HepG2 (cell line): ENCODE measurements at regions of chr1 and their contacts with region 1.

Region 1: GRCh38 chr1:52141513-52142219 is at the start of gene ZFYVE9:
- DNase-seq: peak; percentile 56
- ATAC-seq: peak; percentile 93
- H3K4me3 ChIP-seq: peak within 1 kb of the TSS; percentile 91 to 93 (median 93)
- H3K27ac ChIP-seq: peak within 1 kb of the TSS; percentile 83
- H3K4me1 ChIP-seq: peaks cover 57% of the 10 kb centered on the region
- H3K27me3 ChIP-seq: no peaks in the 10 kb centered on the region; a peak in 1 of 5 replicates
- CTCF ChIP-seq: peak; percentile 81
- EP300 ChIP-seq: no peak
- POLR2A ChIP-seq: peak in 1 of 2 experiments; percentile 39; a peak in 2 of 4 replicates
- RAD21 ChIP-seq: peak; percentile 98
- total RNA-seq, gene ZFYVE9: 19.8 and 26.5 TPM in 2 replicates

Region 2: GRCh38 chr1:51946300-51946699 is 195.4 kb before region 1 on chr1:
- CTCF ChIA-PET with region 1: no interaction called
- POLR2A ChIA-PET with region 1: no interaction called
- in situ Hi-C with region 1: no loop called
- intact Hi-C with region 1: no loop called
- DNase-seq: no peak
- ATAC-seq: no peak
- H3K4me3 ChIP-seq: no peak overlapping the region
- H3K27ac ChIP-seq: no peak overlapping the region
- H3K4me1 ChIP-seq: peaks cover 8% of the 10 kb centered on the region
- H3K27me3 ChIP-seq: no peaks in the 10 kb centered on the region
- CTCF ChIP-seq: no peak
- EP300 ChIP-seq: no peak
- POLR2A ChIP-seq: no peak
- RAD21 ChIP-seq: no peak

Region 3: DNA sequence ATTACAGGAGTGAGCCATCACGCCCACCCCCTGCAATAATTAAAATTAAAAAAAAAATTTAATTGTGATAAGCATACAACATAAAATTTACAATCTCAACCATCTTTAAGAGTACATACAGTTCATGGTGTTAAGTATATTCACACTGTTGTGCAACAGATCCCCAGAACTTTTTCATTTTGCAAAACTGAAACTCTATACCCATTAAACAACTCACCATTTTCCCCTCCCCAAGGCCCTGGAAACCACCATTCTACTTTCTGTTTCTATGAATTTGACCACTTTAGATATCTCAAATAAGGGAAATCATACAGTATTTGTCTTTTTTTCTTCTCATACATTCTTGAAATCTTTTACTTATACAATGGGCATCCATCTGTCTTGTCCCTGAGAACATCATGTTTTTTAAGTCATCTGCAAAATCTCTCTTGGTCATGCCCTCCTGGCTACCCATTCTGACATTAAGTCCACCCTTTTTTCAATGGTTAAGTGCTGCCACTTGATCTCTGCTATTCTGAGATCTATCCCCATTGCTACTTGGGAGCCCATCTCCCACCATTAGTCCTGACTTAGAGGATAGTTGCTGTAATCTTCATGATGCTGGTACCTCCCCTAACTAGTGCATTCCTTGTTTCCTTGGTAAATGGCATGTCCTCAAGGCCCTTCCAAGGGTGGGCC is 39.2 kb before region 1 on chr1:
- CTCF ChIA-PET with region 1: no interaction called
- POLR2A ChIA-PET with region 1: no interaction called
- in situ Hi-C with region 1: no loop called
- intact Hi-C with region 1: no loop called
- DNase-seq: no peak
- ATAC-seq: no peak
- H3K4me3 ChIP-seq: no peak overlapping the region
- H3K27ac ChIP-seq: no peak overlapping the region
- H3K4me1 ChIP-seq: peaks cover 19% of the 10 kb centered on the region
- H3K27me3 ChIP-seq: no peaks in the 10 kb centered on the region
- CTCF ChIP-seq: no peak
- EP300 ChIP-seq: no peak
- POLR2A ChIP-seq: no peak
- RAD21 ChIP-seq: no peak

Region 4: GRCh38 chr1:52179085-52179484 is 37.4 kb after region 1 on chr1:
- CTCF ChIA-PET with region 1: no interaction called
- POLR2A ChIA-PET with region 1: no interaction called
- in situ Hi-C with region 1: no loop called
- intact Hi-C with region 1: no loop called
- DNase-seq: no peak
- ATAC-seq: no peak
- H3K4me3 ChIP-seq: no peak overlapping the region
- H3K27ac ChIP-seq: no peak overlapping the region
- H3K4me1 ChIP-seq: peaks cover 24% of the 10 kb centered on the region
- H3K27me3 ChIP-seq: no peaks in the 10 kb centered on the region
- CTCF ChIP-seq: no peak
- EP300 ChIP-seq: no peak
- POLR2A ChIP-seq: no peak
- RAD21 ChIP-seq: no peak

Region 5: GRCh38 chr1:52288286-52288685 is 146.6 kb after region 1 on chr1:
- CTCF ChIA-PET with region 1: no interaction called
- POLR2A ChIA-PET with region 1: no interaction called
- in situ Hi-C with region 1: loop called (anchors 5 kb)
- intact Hi-C with region 1: no loop called
- DNase-seq: no peak
- ATAC-seq: no peak
- H3K4me3 ChIP-seq: no peak overlapping the region
- H3K27ac ChIP-seq: no peak overlapping the region
- H3K4me1 ChIP-seq: peaks cover 4% of the 10 kb centered on the region
- H3K27me3 ChIP-seq: no peaks in the 10 kb centered on the region
- CTCF ChIP-seq: no peak
- EP300 ChIP-seq: no peak
- POLR2A ChIP-seq: no peak
- RAD21 ChIP-seq: no peak

Region 6: DNA sequence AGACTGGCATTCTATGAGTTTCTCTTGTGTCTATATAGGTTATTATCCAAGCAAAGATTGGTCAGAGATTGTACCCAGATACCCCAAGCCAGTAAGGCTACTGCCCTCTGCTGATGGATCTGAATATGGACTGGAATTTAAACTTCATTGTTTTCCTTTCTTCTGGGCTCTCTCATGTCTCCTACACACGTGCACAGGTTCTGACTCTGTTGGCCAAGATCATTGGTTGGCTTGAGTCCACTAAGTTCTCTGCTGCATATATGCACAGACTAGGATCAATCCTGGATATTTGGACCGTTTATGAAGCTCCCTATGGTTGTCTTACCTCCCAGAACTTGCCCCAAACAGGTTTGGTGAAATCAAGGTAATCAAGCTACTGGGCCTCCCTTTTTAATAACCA is 154.7 kb after region 1 on chr1:
- CTCF ChIA-PET with region 1: interaction called, 16 read pairs
- POLR2A ChIA-PET with region 1: no interaction called
- in situ Hi-C with region 1: no loop called
- intact Hi-C with region 1: loop called (anchors 2 kb)
- DNase-seq: peak; percentile 66
- ATAC-seq: peak; percentile 86
- H3K4me3 ChIP-seq: no peak overlapping the region
- H3K27ac ChIP-seq: no peak overlapping the region
- H3K4me1 ChIP-seq: peaks cover 10% of the 10 kb centered on the region
- H3K27me3 ChIP-seq: no peaks in the 10 kb centered on the region; a peak in 1 of 5 replicates
- CTCF ChIP-seq: peak; percentile 83
- EP300 ChIP-seq: no peak
- POLR2A ChIP-seq: no peak
- RAD21 ChIP-seq: peak; percentile 69; the same call in 1 of the 2 replicates